Motor neuron (in vitro differentiated cells): ENCODE measurements at regions of chr9 and their contacts with region 1.

Region 1: DNA sequence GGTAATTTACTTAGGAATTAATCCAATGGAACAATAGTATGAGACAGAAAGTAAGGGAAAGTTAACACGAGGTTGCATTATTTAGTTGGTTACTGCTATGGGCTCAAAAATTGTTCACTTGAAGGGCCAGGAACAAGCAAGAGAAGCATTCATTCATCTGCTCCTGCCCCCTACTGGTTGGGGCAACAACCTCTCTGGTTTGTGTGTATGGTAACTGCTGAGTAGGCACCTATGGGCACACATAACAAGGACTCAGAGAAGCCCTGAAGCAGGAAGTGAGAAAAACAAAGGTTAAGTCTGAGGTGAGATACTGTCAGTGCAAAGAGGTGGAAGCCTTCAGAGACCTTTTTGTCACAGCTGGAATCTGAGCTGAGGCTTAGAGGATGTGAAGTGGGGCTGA is 34.4 kb upstream of the RANBP6 start:
- ATAC-seq: no peak
- H3K4me3 ChIP-seq: no peak overlapping the region
- H3K27ac ChIP-seq: no peak overlapping the region
- H3K4me1 ChIP-seq: no peaks in the 10 kb centered on the region

Region 2: GRCh38 chr9:5762421-5762820 is 287.4 kb before region 1 on chr9:
- in situ Hi-C with region 1: no loop called
- ATAC-seq: no peak
- H3K4me3 ChIP-seq: no peak overlapping the region
- H3K27ac ChIP-seq: no peak overlapping the region
- H3K4me1 ChIP-seq: no peaks in the 10 kb centered on the region

Region 3: DNA sequence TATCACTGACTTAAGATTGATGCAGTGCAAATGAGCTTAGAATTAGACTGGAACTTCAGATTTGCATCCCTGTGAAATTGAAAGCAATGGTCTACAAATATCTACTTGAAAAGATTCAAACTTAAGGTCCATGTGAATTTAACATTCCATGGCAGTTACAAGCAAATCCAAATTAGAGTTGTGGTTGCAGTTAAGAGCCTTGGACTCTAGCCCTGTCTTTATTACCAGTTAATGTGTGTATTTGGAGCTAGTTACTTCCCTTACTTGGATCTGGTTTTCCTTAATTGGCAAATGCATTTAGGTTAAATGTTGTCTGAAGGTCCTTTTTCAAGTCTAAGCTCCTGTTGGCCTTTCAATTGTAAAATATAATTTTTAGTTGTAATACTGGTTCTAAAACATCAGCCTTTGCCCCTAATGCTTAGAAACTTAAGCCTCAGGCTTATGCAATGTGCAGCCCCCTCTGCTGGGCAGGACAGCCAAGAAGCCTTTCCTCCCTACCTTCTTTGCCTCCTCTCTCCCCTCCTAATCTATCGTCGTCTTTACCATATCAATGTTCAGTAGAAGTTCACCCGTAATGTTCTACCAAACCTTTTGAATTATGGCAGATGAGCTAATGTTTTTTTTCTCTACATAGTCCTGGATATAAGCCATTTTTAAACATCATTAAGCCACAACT is 276.3 kb before region 1 on chr9:
- in situ Hi-C with region 1: no loop called
- ATAC-seq: no peak
- H3K4me3 ChIP-seq: no peak overlapping the region
- H3K27ac ChIP-seq: no peak overlapping the region
- H3K4me1 ChIP-seq: no peaks in the 10 kb centered on the region

Region 4: DNA sequence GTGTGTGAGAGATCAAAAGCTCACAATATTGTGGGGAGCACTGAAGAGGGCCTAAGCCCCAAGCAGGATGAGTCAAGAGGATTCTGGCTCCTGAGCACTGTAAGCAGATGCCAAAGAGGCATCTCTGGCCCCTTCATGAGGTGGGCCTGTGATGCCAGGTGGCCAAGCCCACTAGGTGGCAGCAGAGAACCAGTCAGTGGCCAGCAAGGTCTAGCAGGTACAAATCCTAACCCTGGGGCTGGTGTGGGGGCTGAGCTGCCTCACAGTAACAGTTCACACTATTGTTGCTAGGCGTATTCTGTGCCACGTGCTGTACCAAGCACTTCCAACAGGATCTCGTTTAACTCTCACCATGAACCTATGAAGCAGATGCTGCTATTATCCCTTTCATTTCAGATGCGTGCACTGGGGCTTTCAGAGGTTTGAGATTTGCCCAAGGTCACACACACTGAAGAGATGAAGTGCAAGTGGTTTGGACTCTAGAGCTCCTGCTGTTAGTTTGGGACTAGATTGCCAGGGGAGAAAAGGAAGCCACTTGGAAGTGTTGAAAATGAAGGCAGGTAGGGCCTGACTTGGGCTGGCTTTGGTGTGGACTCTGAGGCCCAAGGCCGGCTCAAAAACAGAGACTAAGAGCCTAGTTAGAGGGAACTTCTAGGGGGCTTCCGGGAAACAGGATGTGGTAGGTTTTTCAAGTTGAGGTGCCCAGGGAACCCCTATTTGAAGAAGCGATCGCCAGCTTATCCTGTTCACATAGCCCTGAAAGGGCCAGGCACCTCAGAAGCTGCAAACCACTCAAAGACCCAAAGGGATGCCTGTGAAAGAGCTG is 163.5 kb before region 1 on chr9:
- in situ Hi-C with region 1: loop called in 4 of 9 experiments (anchors 25 kb)
- ATAC-seq: peak; percentile 99 to 100 (median 100)
- H3K4me3 ChIP-seq: no peak overlapping the region
- H3K27ac ChIP-seq: no peak overlapping the region
- H3K4me1 ChIP-seq: no peaks in the 10 kb centered on the region